ENCODE measurements at regions of chr14 and their contacts with region 1.

Region 1: GRCh38 chr14:21557084-21557901 is 22.6 kb downstream of the OR10G3 start:
- DNase-seq: peak; percentile 85 to 91
- H3K4me3 ChIP-seq: peak overlapping the region; percentile 10
- H3K4me3 Mint-ChIP-seq: peak overlapping the region; percentile 74
- H3K27ac Mint-ChIP-seq: peak overlapping the region; percentile 98
- H3K4me1 ChIP-seq: peaks cover 15% of the 10 kb centered on the region; the same call in 1 of the 2 replicates
- H3K4me1 Mint-ChIP-seq: peaks cover 14% of the 10 kb centered on the region
- H3K27me3 ChIP-seq: no peaks in the 10 kb centered on the region
- H3K27me3 Mint-ChIP-seq: no peaks in the 10 kb centered on the region
- CTCF ChIP-seq: peak; percentile 60 to 66

Region 2: DNA sequence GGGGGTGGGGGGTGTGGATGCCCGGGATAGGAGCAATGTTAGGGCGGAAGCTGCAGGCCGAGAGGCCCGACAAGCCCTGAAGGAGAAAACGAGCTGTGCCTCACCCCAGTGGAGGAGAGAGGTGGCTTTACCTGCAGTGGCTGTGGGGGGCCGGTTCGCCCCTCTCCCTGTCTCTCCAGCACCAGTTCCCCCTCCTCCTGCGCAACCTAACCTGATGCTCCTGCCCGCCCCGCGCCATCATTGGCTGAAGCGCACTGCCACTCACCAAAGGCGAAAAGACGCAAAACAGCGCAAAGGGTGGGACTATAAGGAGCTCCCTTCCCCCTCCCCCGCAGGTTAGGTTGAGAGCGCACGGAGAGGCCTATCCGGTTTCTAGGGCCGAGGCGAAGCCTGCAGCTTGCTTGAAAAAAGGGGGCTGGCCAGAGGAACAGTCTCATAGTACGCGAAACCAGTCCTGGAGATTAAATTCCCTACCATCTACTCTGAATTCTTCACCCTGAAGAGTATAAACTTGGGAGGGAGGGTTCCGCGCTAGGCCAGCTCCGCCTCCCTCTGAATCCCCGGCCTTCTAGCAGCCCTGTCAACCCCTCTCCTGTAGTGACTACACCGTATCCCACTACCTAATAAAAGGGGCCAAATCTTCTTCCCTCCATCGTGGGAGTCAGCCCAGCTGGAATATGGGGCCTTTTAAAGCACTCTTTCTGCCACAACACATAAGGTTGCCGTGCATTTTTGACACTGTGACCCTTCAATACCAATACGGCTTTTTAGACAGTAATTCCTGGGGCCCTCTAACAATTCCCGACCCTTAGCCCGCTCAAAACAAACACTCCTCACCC is 120.0 kb before region 1 on chr14:
- CTCF ChIA-PET with region 1: interaction called, 3 read pairs
- POLR2A ChIA-PET with region 1: no interaction called
- intact Hi-C with region 1: loop called (anchors 1 kb)
- DNase-seq: peak; percentile 99
- H3K4me3 ChIP-seq: peak overlapping the region; percentile 93
- H3K4me3 Mint-ChIP-seq: peak overlapping the region; percentile 96
- H3K27ac Mint-ChIP-seq: peak overlapping the region; percentile 94
- H3K4me1 ChIP-seq: peaks cover 10% of the 10 kb centered on the region
- H3K4me1 Mint-ChIP-seq: peaks cover 13% of the 10 kb centered on the region
- H3K27me3 ChIP-seq: no peaks in the 10 kb centered on the region
- H3K27me3 Mint-ChIP-seq: no peaks in the 10 kb centered on the region
- CTCF ChIP-seq: no peak

Region 3: GRCh38 chr14:21476925-21477681 is 80.2 kb before region 1 on chr14 and contains the starts of genes RAB2B and TOX4:
- CTCF ChIA-PET with region 1: interaction called, 4 read pairs
- POLR2A ChIA-PET with region 1: interaction called, 6 read pairs
- intact Hi-C with region 1: loop called (anchors 1 kb)
- DNase-seq: peak; percentile 97 to 98
- H3K4me3 ChIP-seq: peak within 1 kb of the TSS; percentile 97
- H3K4me3 Mint-ChIP-seq: peak within 1 kb of the TSS; percentile 97
- H3K27ac Mint-ChIP-seq: peak within 1 kb of the TSS; percentile 97
- H3K4me1 ChIP-seq: peaks cover 3% of the 10 kb centered on the region; the same call in 1 of the 2 replicates
- H3K4me1 Mint-ChIP-seq: no peaks in the 10 kb centered on the region
- H3K27me3 ChIP-seq: no peaks in the 10 kb centered on the region
- H3K27me3 Mint-ChIP-seq: no peaks in the 10 kb centered on the region
- CTCF ChIP-seq: peak; percentile 92 to 99
- total RNA-seq, gene RAB2B: 18.8 and 20.9 TPM in 2 replicates
- total RNA-seq, gene TOX4: 76.6 and 78.8 TPM in 2 replicates

Region 4: GRCh38 chr14:21510735-21511657 is 46.3 kb before region 1 on chr14 and contains the start of gene METTL3:
- CTCF ChIA-PET with region 1: no interaction called
- POLR2A ChIA-PET with region 1: interaction called, 11 read pairs
- intact Hi-C with region 1: loop called (anchors 1 kb)
- DNase-seq: peak; percentile 94 to 98
- H3K4me3 ChIP-seq: peak within 1 kb of the TSS; percentile 89
- H3K4me3 Mint-ChIP-seq: peak within 1 kb of the TSS; percentile 96
- H3K27ac Mint-ChIP-seq: peak within 1 kb of the TSS; percentile 97
- H3K4me1 ChIP-seq: no peaks in the 10 kb centered on the region
- H3K4me1 Mint-ChIP-seq: peaks cover 8% of the 10 kb centered on the region
- H3K27me3 ChIP-seq: no peaks in the 10 kb centered on the region
- H3K27me3 Mint-ChIP-seq: no peaks in the 10 kb centered on the region
- CTCF ChIP-seq: no peak
- total RNA-seq, gene METTL3: 40.1 and 43.8 TPM in 2 replicates

Measured in Caco-2 (cell line).